Activated naive CD4-positive, alpha-beta T cell treated with anti-CD3 and anti-CD28 coated beads for 36 hours (primary cell): ENCODE measurements at regions of chr14 and their contacts with region 1.

Region 1: DNA sequence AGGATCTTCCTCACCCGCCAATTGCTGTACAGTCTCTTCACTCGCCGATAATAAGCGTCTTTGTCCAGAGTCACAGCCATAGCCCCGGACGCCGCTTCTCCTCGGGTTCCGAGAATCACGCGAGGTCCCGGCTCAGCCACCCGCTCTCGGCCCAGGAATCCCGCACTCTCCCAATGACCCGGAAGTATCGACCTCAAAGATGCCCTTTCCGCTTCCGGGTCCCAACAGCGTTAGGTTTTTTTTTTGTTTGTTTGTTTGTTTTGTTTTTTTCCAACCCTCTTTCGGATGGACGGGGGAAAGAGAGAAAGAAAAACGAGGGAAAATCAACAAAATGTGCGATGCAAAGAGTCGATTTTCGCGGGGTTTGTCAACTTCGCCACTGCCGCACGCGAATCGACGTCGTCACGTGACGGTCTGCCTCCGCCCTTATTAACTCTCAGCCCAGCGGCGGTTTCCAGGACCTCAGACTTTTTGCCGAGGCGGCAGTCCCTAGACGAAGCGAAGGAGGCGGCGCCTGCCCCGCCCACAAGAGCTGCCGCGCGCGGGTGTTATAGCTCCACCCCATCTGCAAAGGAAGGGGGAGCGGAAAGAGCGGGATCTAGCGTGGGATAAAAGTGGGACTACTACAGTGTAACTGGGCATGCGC is at the start of gene SUPT16H:
- DNase-seq: peak; percentile 97
- H3K4me3 Mint-ChIP-seq: peak within 1 kb of the TSS; percentile 98
- H3K27ac Mint-ChIP-seq: peak within 1 kb of the TSS; percentile 99
- H3K4me1 Mint-ChIP-seq: peaks cover 34% of the 10 kb centered on the region
- H3K27me3 Mint-ChIP-seq: no peaks in the 10 kb centered on the region
- total RNA-seq, gene SUPT16H: 164 to 165 TPM

Region 2: DNA sequence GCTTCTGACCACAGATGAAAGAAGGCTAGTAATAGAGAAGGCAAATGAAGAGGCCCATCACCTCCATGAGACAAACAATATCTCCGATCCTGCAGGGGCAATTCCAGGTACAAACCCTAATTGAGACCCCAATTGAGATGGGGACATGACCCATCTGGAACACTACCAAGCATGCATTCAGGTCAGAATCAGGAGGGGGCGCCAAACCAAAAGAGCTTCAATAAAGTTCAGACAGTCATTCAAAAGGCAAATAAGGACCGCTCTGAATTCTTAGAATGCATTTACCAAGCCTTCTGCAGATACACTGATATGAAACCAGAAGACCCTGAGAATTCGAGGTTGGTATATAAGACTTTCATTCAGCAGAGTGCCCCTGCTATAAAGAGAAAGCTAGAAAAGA is 626.0 kb before region 1 on chr14:
- CTCF ChIA-PET with region 1: no interaction called
- intact Hi-C with region 1: no loop called
- DNase-seq: peak; percentile 62
- H3K4me3 Mint-ChIP-seq: no peak overlapping the region
- H3K27ac Mint-ChIP-seq: no peak overlapping the region
- H3K4me1 Mint-ChIP-seq: no peaks in the 10 kb centered on the region
- H3K27me3 Mint-ChIP-seq: no peaks in the 10 kb centered on the region

Region 3: DNA sequence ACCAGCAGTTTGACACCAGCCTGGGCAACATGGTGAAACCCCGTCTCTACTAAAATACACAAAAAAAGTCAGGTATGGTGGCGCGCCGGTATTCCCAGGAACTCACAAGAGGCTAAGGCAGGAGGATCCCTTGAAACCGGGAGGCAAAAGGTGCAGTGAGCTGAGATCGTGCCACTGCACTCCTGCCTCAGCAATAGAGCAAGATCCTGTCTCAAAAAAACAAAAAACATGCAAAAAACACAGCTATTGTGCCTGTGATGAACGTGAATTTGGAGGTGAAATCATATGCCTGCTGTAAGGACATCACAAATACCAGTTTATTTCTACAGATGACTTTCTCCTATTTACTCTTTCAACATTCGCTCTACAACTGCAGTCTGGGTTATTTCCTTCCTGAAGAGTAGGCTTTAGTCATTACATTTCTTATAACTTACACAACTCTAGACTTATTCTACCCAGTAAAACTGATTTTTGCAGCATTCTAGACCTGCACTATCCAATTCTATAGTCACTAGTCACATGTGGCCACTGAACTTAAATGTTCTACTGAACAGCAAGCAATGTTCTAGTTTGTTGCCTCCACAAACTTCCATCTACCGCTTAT is 163.0 kb before region 1 on chr14:
- CTCF ChIA-PET with region 1: no interaction called
- intact Hi-C with region 1: loop called (anchors 5 kb)
- DNase-seq: no peak
- H3K4me3 Mint-ChIP-seq: peak overlapping the region; percentile 42
- H3K27ac Mint-ChIP-seq: peak overlapping the region; percentile 89
- H3K4me1 Mint-ChIP-seq: peaks cover 87% of the 10 kb centered on the region
- H3K27me3 Mint-ChIP-seq: no peaks in the 10 kb centered on the region

Region 4: GRCh38 chr14:21414137-21414631 is 30.2 kb after region 1 on chr14:
- CTCF ChIA-PET with region 1: no interaction called
- intact Hi-C with region 1: loop called (anchors 1 kb)
- DNase-seq: peak; percentile 14
- H3K4me3 Mint-ChIP-seq: no peak overlapping the region
- H3K27ac Mint-ChIP-seq: peak overlapping the region; percentile 77
- H3K4me1 Mint-ChIP-seq: peaks cover 35% of the 10 kb centered on the region
- H3K27me3 Mint-ChIP-seq: no peaks in the 10 kb centered on the region

Region 5: GRCh38 chr14:21476925-21477681 is 93.1 kb after region 1 on chr14 and contains the starts of genes RAB2B and TOX4:
- CTCF ChIA-PET with region 1: interaction called, 7 read pairs
- intact Hi-C with region 1: loop called (anchors 1 kb)
- DNase-seq: peak; percentile 97
- H3K4me3 Mint-ChIP-seq: peak within 1 kb of the TSS; percentile 100
- H3K27ac Mint-ChIP-seq: peak within 1 kb of the TSS; percentile 98
- H3K4me1 Mint-ChIP-seq: peaks cover 31% of the 10 kb centered on the region
- H3K27me3 Mint-ChIP-seq: no peaks in the 10 kb centered on the region
- total RNA-seq, gene RAB2B: 20.5 to 21.4 TPM
- total RNA-seq, gene TOX4: 57.4 to 58.6 TPM

Region 6: DNA sequence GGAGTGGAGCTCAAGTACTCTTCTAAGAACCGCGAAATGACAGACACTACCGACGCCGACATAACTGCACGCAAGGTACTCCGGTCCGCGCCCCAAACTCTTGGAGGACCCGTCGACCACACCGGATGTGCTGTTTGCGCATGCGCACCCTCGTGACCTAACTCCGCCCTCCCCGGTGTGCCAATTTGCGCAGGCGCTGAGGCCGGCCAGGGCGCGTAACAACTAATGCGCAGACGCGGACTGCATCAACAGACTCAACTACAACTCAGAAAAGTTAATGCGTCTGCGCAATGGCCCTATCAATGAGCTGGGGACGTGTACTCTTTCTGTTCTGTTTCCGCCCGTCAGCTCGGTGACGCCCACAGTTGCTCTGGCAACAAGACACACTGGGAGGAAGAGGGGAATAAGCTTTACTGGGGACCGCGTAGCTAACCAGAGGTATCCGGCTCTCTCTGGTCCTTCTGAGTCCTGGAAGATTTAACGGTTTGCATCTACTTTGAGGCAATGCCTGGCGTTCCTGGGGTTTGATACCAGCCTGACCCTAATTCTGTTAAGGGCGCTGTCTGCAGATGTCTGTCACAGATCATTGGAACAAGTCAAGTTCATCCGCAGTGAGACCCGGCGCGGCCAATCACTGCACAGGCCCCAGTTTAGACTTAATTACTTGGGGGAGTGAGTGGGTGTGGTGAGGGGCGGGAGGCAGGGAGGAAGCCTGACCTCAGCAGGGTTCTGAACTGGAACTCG is 1205.3 kb after region 1 on chr14 and contains the start of gene DAD1:
- CTCF ChIA-PET with region 1: no interaction called
- intact Hi-C with region 1: loop called (anchors 10 kb)
- DNase-seq: peak; percentile 100
- H3K4me3 Mint-ChIP-seq: peak within 1 kb of the TSS; percentile 98
- H3K27ac Mint-ChIP-seq: peak within 1 kb of the TSS; percentile 99
- H3K4me1 Mint-ChIP-seq: peaks cover 68% of the 10 kb centered on the region
- H3K27me3 Mint-ChIP-seq: no peaks in the 10 kb centered on the region
- total RNA-seq, gene DAD1: 219 to 226 TPM